ENCODE measurements at regions of chr5 and their contacts with region 1.

Region 1: DNA sequence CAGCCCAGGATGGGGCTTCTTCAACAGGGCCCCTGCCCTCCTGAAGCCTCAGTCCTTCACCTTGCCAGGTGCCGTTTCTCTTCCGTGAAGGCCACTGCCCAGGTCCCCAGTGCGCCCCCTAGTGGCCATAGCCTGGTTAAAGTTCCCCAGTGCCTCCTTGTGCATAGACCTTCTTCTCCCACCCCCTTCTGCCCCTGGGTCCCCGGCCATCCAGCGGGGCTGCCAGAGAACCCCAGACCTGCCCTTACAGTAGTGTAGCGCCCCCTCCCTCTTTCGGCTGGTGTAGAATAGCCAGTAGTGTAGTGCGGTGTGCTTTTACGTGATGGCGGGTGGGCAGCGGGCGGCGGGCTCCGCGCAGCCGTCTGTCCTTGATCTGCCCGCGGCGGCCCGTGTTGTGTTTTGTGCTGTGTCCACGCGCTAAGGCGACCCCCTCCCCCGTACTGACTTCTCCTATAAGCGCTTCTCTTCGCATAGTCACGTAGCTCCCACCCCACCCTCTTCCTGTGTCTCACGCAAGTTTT is 23.6 kb downstream of the PCDHGC5 start:
- DNase-seq: peak; percentile 62 to 63
- ATAC-seq: peak in 1 of 2 experiments; percentile 75; a peak in 3 of 6 replicates
- H3K4me3 ChIP-seq: no peak overlapping the region
- H3K27ac ChIP-seq: no peak overlapping the region
- H3K4me1 ChIP-seq: no peaks in the 10 kb centered on the region
- CTCF ChIP-seq: peak; percentile 65
- EP300 ChIP-seq: no peak
- POLR2A ChIP-seq: no peak
- RAD21 ChIP-seq: peak; percentile 20 to 42; a peak in 3 of 5 replicates

Region 2: DNA sequence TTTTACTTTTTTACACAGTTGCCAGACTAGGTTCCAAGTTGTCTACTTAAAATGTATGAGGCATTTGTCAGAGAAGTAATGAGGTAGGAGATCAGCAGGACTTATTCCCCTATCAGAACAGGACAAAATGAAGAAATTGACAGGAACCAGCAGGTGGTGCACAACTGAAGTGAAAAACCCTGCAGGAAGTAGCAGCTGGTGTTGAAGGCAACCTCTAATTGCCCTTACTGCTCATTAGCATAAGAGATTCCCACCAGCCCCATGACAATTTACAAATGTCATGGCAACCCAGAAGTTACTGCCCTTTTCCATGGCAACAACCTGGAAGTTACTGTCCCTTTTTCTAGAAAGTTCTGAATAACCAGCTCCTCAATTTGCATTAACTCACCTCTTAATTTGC is 261.9 kb before region 1 on chr5:
- CTCF ChIA-PET with region 1: no interaction called
- POLR2A ChIA-PET with region 1: no interaction called
- DNase-seq: no peak
- ATAC-seq: no peak
- H3K4me3 ChIP-seq: no peak overlapping the region
- H3K27ac ChIP-seq: no peak overlapping the region
- H3K4me1 ChIP-seq: no peaks in the 10 kb centered on the region
- CTCF ChIP-seq: no peak
- EP300 ChIP-seq: no peak
- POLR2A ChIP-seq: no peak
- RAD21 ChIP-seq: no peak

Region 3: GRCh38 chr5:141475625-141476131 is 36.8 kb before region 1 on chr5 and contains the start of gene PCDHGC3:
- CTCF ChIA-PET with region 1: interaction called, 11 read pairs
- POLR2A ChIA-PET with region 1: no interaction called
- DNase-seq: peak; percentile 87 to 95
- ATAC-seq: peak; percentile 99 to 100
- H3K4me3 ChIP-seq: peak within 1 kb of the TSS; percentile 55
- H3K27ac ChIP-seq: peak within 1 kb of the TSS; percentile 38 to 78
- H3K4me1 ChIP-seq: no peaks in the 10 kb centered on the region
- CTCF ChIP-seq: peak; percentile 25; the same call in 1 of the 3 replicates
- EP300 ChIP-seq: no peak
- POLR2A ChIP-seq: peak; percentile 17; the same call in 1 of the 2 replicates
- RAD21 ChIP-seq: peak; percentile 45 to 64
- polyA plus RNA-seq, gene PCDHGC3: 1.6 and 1.9 TPM in 2 replicates

Region 4: GRCh38 chr5:141492168-141492885 is 20.1 kb before region 1 on chr5:
- CTCF ChIA-PET with region 1: interaction called, 16 read pairs
- POLR2A ChIA-PET with region 1: no interaction called
- DNase-seq: no peak
- ATAC-seq: no peak
- H3K4me3 ChIP-seq: no peak overlapping the region
- H3K27ac ChIP-seq: no peak overlapping the region
- H3K4me1 ChIP-seq: no peaks in the 10 kb centered on the region
- CTCF ChIP-seq: no peak
- EP300 ChIP-seq: no peak
- POLR2A ChIP-seq: no peak
- RAD21 ChIP-seq: no peak

Region 5: GRCh38 chr5:141681695-141682641 is 169.5 kb after region 1 on chr5 and contains the start of gene ARAP3:
- CTCF ChIA-PET with region 1: no interaction called
- POLR2A ChIA-PET with region 1: no interaction called
- DNase-seq: peak; percentile 69 to 75
- ATAC-seq: peak; percentile 87 to 93
- H3K4me3 ChIP-seq: peak within 1 kb of the TSS; percentile 49
- H3K27ac ChIP-seq: peak within 1 kb of the TSS; percentile 88 to 98
- H3K4me1 ChIP-seq: peaks cover 24% of the 10 kb centered on the region
- CTCF ChIP-seq: no peak
- EP300 ChIP-seq: no peak
- POLR2A ChIP-seq: peak; percentile 40
- RAD21 ChIP-seq: no peak
- polyA plus RNA-seq, gene ARAP3: 3.0 and 4.5 TPM in 2 replicates